Activated CD8-positive, alpha-beta memory T cell treated with anti-CD3 and anti-CD28 coated beads, Interleukin-2, amount 10 ng/mL, durations not matched to agents 7 days and 5 days (primary cell): ENCODE measurements at regions of chr19 and their contacts with region 1.

Region 1: GRCh38 chr19:48492925-48493717 is 18.5 kb downstream of the LMTK3 start:
- DNase-seq: peak; percentile 91
- ATAC-seq: peak; percentile 74
- H3K4me3 Mint-ChIP-seq: peak overlapping the region; percentile 26
- H3K27ac Mint-ChIP-seq: peak overlapping the region; percentile 26
- H3K4me1 Mint-ChIP-seq: peaks cover 30% of the 10 kb centered on the region
- H3K27me3 Mint-ChIP-seq: peaks cover 51% of the 10 kb centered on the region

Region 2: DNA sequence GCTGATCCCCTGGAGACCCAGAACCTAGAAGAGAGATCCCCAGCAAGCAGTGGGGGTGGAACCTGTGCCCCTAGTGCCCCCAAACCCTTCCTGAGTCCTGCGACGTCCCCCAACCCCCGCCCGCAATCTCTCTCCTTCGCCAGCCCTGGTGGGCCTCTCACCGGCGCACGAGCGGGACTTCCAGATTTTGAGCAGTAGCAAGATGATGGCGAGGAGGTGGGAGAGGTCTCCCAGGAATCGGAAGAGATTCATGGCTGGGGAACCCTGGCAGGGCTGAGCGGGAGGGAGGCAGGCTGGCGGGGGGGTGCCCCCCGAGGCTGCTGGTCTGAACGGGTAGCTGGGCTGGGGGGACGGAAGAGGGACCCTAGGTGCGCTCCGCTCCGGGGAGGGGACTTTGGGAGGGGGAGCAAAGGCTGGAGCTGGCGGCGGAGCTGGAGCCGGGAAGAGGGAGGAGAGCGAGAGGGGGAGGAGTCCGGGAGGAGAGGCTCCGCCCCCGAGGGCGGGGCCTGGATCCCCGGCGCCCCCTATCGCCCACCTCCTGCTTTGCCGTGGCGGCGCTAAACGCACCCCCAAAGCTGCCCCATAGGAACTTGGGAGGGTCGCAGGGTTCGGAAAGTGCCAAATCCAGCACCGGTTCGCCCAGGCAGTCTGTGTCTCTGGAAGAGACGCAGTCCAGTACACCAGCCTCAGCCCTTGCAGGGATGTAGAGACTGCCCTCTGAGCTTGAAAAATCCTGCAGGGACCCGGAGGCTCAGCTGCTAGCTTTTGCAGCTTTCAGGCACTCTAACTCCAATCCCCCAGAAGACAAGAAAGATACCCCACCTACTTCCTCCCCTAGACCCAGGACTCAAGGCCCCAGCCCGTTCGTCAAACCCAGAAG is 101.8 kb before region 1 on chr19 and contains the start of gene KDELR1:
- CTCF ChIA-PET with region 1: interaction called, 12 read pairs
- DNase-seq: peak; percentile 77
- ATAC-seq: peak; percentile 79
- H3K4me3 Mint-ChIP-seq: peak within 1 kb of the TSS; percentile 93
- H3K27ac Mint-ChIP-seq: peak within 1 kb of the TSS; percentile 92
- H3K4me1 Mint-ChIP-seq: peaks cover 21% of the 10 kb centered on the region
- H3K27me3 Mint-ChIP-seq: peaks cover 32% of the 10 kb centered on the region
- total RNA-seq, gene KDELR1: 64.8 to 72.2 TPM

Region 3: DNA sequence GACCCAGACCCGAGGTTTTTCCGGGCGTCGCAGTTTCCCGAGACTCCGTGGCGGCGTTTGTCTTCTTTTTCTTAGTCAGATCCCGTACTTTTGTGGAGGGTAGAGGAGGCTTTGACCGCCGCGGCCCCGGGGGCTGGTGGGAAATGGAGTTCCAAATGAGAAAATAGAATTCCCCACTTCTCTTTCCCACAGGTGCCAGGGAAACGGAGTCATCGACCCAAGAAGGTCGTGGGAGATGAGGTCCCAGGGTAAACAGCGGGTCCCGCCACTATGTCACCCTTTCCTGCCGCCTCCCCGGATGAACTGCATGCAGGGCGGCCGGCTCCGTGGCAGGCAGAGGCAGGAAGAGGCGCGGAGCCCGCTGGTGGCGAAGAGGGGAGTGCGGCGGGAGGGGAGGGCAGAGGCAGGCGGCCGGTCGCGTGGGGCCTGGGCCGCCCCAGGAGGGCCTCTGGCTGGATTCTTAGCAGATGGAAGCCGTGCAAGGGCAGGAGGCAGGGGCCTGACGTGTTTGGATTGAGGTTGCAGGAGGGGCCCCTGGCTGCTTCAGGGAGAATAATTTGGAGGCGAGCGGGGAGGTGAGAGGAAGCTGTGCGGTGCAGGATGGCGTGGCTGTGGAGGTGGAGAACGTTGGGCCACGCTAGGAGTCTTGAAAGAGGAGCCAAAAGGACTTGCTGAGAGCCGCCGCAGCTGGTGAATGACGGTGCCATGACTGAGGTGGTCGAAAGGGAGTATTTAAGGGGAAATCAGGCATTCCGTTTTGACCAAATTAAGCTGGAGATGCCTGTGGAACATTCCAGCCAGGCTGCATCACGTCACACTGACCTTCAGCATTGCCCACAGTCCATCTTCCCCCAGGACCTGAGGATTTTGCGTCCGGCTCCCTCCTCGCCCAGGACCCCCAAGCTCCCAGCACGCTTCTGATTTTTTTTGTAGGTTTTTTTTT is 12.3 kb before region 1 on chr19:
- CTCF ChIA-PET with region 1: interaction called, 36 read pairs
- DNase-seq: peak; percentile 77
- ATAC-seq: peak; percentile 87
- H3K4me3 Mint-ChIP-seq: peak overlapping the region; percentile 64
- H3K27ac Mint-ChIP-seq: peak overlapping the region; percentile 78
- H3K4me1 Mint-ChIP-seq: peaks cover 15% of the 10 kb centered on the region
- H3K27me3 Mint-ChIP-seq: no peaks in the 10 kb centered on the region

Region 4: DNA sequence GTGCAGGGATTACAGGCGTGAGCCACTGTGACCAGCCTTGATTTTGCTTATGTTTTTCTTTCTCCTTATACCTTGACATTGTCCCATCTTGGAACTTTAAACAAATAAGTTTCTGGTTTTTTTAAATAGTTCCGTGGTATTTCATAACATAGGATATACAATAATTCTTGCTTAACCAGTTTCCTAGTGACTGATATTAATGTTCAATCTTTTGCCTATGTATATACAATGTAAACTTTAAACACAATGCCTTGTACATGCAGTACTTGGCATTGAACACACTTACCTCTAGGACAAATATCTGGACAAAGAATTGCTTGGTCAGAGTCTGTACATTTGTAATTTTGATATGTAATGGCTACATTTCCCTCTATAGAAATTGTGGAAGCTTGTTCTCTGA is 89.0 kb after region 1 on chr19:
- CTCF ChIA-PET with region 1: interaction called, 72 read pairs
- DNase-seq: no peak
- ATAC-seq: no peak
- H3K4me3 Mint-ChIP-seq: no peak overlapping the region
- H3K27ac Mint-ChIP-seq: no peak overlapping the region
- H3K4me1 Mint-ChIP-seq: peaks cover 6% of the 10 kb centered on the region
- H3K27me3 Mint-ChIP-seq: peaks cover 3% of the 10 kb centered on the region

Region 5: GRCh38 chr19:48608798-48609263 is 115.7 kb after region 1 on chr19:
- CTCF ChIA-PET with region 1: interaction called, 22 read pairs
- DNase-seq: peak; percentile 70
- ATAC-seq: peak; percentile 83
- H3K4me3 Mint-ChIP-seq: no peak overlapping the region
- H3K27ac Mint-ChIP-seq: peak overlapping the region; percentile 66
- H3K4me1 Mint-ChIP-seq: peaks cover 2% of the 10 kb centered on the region
- H3K27me3 Mint-ChIP-seq: no peaks in the 10 kb centered on the region